HepG2 (cell line): ENCODE measurements at regions of chr20 and their contacts with region 1.

Region 1: DNA sequence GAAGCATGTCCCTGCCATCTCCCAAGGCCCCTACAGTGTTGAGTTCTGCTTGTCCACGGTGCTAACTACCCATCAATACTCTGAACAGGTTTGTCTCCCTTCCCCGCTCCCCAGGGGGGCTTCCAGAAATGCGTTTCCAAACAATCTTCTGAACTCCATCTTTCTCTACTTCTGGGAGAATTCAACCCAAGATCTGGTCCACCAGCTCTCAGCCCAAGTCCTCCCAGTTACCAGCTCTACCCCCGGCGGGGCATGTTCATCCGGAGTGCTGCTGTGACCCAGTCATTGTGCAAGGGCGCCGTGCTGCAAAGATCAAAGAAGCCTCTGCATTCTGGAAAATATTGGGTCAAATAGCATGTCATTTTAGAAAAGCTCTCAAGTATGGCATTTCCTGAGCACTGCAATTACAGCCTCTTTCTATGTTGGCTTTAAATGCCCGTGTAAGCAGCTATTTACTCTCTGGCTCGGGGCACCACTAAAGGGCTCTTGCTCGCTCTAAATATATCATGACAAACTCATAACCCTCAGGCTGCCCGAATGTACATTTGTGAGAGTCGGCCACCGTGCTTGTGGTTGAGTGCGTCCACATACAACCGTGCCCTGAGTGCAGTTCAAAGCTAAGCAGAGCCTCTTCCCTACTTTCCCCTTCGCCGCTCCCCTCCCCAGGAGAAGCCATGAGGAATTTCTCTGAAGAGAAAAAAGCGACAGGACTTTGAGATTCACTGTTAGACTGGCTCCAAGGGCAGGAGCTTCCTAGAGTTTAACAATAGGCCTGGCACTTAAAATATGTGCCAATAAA is 71.6 kb downstream of the BANF2 start:
- DNase-seq: peak; percentile 97
- ATAC-seq: peak; percentile 93
- H3K4me3 ChIP-seq: peak overlapping the region; percentile 26 to 59 (median 39)
- H3K27ac ChIP-seq: peak overlapping the region; percentile 79
- H3K4me1 ChIP-seq: peaks cover 39% of the 10 kb centered on the region
- H3K27me3 ChIP-seq: no peaks in the 10 kb centered on the region
- CTCF ChIP-seq: no peak
- EP300 ChIP-seq: peak; percentile 48 to 86; a peak in 1 of 4 replicates
- POLR2A ChIP-seq: peak in 1 of 2 experiments; percentile 52; a peak in 2 of 4 replicates
- RAD21 ChIP-seq: peak; percentile 22; the same call in 1 of the 2 replicates

Region 2: DNA sequence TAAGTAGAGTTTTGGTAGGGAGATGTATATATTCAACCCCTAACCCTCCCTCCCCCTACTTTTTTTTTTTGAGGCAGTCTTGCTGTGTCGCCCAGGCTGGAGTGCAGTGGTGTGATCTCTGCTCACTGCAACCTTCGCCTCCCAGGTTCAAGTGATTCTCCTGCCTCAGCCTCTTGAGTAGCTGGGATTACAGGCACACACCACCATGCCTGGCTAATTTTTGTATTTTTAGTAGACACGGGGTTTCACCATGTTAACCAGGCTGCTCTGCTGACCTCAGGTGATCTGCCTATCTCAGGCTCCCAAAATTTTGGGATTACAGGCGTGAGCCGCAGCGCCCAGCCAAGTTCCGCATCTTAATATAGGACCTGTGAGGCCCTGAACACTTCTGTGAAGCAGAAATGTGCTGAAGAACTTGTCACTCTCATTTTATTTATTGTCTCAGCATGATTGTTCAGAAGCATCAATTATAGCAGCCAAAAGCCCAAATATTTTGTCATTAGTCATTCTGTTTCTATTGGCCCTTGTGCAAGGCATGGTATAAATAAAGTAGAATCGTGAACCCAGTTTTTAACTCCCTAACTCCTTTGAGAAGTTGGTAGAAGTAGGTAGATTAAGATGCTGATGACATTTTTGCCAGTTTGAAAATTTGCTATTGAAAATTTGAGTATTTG is 182.1 kb before region 1 on chr20:
- CTCF ChIA-PET with region 1: no interaction called
- POLR2A ChIA-PET with region 1: no interaction called
- in situ Hi-C with region 1: no loop called
- intact Hi-C with region 1: no loop called
- DNase-seq: no peak
- ATAC-seq: no peak
- H3K4me3 ChIP-seq: no peak overlapping the region
- H3K27ac ChIP-seq: no peak overlapping the region
- H3K4me1 ChIP-seq: no peaks in the 10 kb centered on the region
- H3K27me3 ChIP-seq: no peaks in the 10 kb centered on the region
- CTCF ChIP-seq: no peak
- EP300 ChIP-seq: no peak
- POLR2A ChIP-seq: no peak
- RAD21 ChIP-seq: no peak

Region 3: DNA sequence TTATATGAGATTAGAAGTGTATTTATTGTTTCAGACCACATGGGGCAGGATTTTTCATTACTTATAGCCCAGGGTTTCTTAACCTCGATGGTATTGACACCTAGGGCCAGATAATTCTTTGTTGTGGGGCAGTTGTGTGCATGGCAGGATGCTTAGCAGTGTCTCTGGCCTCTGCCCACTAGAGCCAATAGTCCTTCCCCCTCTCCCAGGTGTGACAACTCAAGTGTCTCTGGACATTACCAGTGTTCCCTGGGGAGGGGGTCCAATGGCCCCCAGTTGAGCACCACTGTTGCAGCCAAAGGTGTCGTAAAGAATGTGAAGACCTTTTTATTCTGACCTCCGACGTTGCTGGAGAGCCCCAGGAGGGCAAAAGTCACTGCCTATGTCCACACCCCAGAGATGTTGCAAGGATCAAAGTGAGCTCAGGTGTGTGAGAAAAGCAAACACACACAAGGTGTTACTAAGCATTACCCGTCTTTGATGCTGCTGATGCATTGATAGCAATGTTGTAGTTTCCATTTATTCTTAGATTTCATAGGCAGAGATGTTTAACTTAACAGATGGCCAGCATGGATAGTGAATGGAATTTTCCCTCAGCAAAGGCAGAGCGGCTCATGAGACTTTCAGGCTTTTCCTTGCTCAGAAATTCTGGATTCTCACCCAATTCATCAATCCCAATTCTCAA is 49.5 kb before region 1 on chr20:
- CTCF ChIA-PET with region 1: no interaction called
- POLR2A ChIA-PET with region 1: interaction called, 3 read pairs
- in situ Hi-C with region 1: no loop called
- intact Hi-C with region 1: loop called (anchors 2 kb)
- DNase-seq: peak; percentile 99
- ATAC-seq: peak; percentile 91
- H3K4me3 ChIP-seq: peak overlapping the region in 1 of 3 experiments; percentile 8; a peak in 2 of 6 replicates
- H3K27ac ChIP-seq: peak overlapping the region; percentile 55
- H3K4me1 ChIP-seq: peaks cover 44% of the 10 kb centered on the region
- H3K27me3 ChIP-seq: peaks cover 4 to 65% of the 10 kb centered on the region in 2 experiments; a peak in 4 of 5 replicates
- CTCF ChIP-seq: peak; percentile 35; the same call in 1 of the 2 replicates
- EP300 ChIP-seq: peak; percentile 99; a peak in 3 of 4 replicates
- POLR2A ChIP-seq: no peak
- RAD21 ChIP-seq: peak; percentile 59; the same call in 1 of the 2 replicates

Region 4: GRCh38 chr20:17783671-17784070 is 12.3 kb after region 1 on chr20:
- CTCF ChIA-PET with region 1: no interaction called
- POLR2A ChIA-PET with region 1: interaction called, 14 read pairs
- in situ Hi-C with region 1: no loop called
- intact Hi-C with region 1: no loop called
- DNase-seq: no peak
- ATAC-seq: no peak
- H3K4me3 ChIP-seq: no peak overlapping the region
- H3K27ac ChIP-seq: no peak overlapping the region
- H3K4me1 ChIP-seq: peaks cover 55% of the 10 kb centered on the region
- H3K27me3 ChIP-seq: peaks cover 6 to 20% of the 10 kb centered on the region in 2 experiments; a peak in 3 of 5 replicates
- CTCF ChIP-seq: no peak
- EP300 ChIP-seq: no peak
- POLR2A ChIP-seq: no peak
- RAD21 ChIP-seq: no peak

Region 5: GRCh38 chr20:17825960-17826843 is 54.8 kb after region 1 on chr20:
- CTCF ChIA-PET with region 1: no interaction called
- POLR2A ChIA-PET with region 1: interaction called, 10 read pairs
- in situ Hi-C with region 1: no loop called
- intact Hi-C with region 1: no loop called
- DNase-seq: peak; percentile 44
- ATAC-seq: peak; percentile 10; the same call in 1 of the 3 replicates
- H3K4me3 ChIP-seq: no peak overlapping the region
- H3K27ac ChIP-seq: no peak overlapping the region
- H3K4me1 ChIP-seq: peaks cover 88% of the 10 kb centered on the region
- H3K27me3 ChIP-seq: no peaks in the 10 kb centered on the region; a peak in 1 of 5 replicates
- CTCF ChIP-seq: no peak
- EP300 ChIP-seq: no peak
- POLR2A ChIP-seq: no peak
- RAD21 ChIP-seq: no peak

Region 6: DNA sequence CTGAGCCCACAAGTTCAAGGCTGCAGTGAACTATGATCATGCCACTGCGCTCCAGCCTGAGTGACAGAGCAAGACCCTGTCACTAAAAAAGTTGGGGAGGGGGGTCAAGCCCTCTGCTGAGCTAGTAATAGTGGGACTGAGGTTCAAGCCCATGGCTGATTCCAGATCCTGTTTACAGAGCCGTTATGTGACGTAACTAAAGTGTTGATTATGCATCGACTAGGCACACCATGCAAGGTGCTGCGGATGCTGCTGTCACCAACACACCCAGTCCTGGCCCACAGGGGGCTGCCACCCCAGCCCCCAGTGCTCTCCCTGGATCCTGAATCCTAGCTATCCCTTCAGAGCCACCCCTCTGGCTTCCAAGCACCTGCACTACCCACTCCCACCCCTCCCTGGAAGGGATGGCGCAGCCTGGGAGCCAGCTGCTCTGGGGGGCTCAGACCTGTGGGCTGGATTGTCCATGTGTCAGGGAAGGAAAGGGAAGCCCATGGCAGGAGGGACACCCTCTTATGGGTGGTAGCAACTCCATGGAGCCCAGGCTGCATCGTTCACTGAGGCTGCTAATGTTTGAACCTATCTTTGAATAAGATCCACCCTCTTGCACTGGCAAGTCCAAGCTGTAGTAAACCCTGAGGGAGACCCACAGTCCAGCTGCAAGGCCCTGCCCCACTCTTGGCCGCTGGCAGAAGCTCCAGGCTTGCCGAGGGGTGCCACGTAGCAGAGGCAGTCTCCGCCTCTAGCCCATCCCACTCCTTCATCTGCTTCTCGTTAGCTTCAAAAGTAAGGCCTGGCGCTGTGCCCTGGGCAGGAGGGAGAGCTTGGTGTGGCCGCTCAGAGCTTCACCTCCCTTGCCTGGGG is 102.2 kb after region 1 on chr20:
- CTCF ChIA-PET with region 1: no interaction called
- POLR2A ChIA-PET with region 1: interaction called, 30 read pairs
- in situ Hi-C with region 1: no loop called
- intact Hi-C with region 1: no loop called
- DNase-seq: peak; percentile 91
- ATAC-seq: peak; percentile 71
- H3K4me3 ChIP-seq: peak overlapping the region in 2 of 3 experiments; percentile 1 to 55; a peak in 3 of 6 replicates
- H3K27ac ChIP-seq: peak overlapping the region; percentile 78
- H3K4me1 ChIP-seq: peaks cover 86% of the 10 kb centered on the region
- H3K27me3 ChIP-seq: no peaks in the 10 kb centered on the region
- CTCF ChIP-seq: peak; percentile 12; the same call in 1 of the 2 replicates
- EP300 ChIP-seq: no peak; a peak in 1 of 4 replicates
- POLR2A ChIP-seq: peak; percentile 73 to 77
- RAD21 ChIP-seq: peak; percentile 11